ENCODE measurements at regions of chr13 and their contacts with region 1.

Region 1: DNA sequence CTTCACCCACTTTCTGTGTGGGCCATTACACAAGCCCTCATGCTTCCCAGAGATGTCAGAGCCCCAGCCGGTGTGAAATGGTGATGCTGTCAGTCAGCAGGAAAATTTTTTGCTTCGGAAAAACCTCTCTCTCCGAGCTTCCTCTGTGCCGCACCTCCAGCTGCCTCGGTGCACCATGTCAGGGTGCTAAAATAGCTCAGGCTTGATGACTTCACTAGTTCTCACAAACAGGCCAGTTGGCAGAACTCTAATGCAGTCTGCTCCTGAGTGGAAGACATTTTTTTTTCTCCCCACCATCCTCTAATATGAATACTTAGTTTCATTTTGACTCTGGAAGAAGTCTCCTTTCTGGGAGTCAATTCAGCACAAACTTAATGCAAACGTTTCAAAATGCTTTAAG is 71.3 kb downstream of the KLF12 start:
- DNase-seq: no peak
- ATAC-seq: no peak
- H3K4me3 ChIP-seq: no peak overlapping the region
- H3K27ac ChIP-seq: no peak overlapping the region
- H3K4me1 ChIP-seq: no peaks in the 10 kb centered on the region
- H3K27me3 ChIP-seq: no peaks in the 10 kb centered on the region
- CTCF ChIP-seq: no peak
- POLR2A ChIP-seq: no peak
- RAD21 ChIP-seq: no peak

Region 2: GRCh38 chr13:73278186-73278585 is 784.7 kb before region 1 on chr13:
- CTCF ChIA-PET with region 1: no interaction called
- POLR2A ChIA-PET with region 1: no interaction called
- RAD21 ChIA-PET with region 1: no interaction called
- intact Hi-C with region 1: no loop called
- DNase-seq: no peak
- ATAC-seq: no peak
- H3K4me3 ChIP-seq: no peak overlapping the region
- H3K27ac ChIP-seq: no peak overlapping the region
- H3K4me1 ChIP-seq: no peaks in the 10 kb centered on the region
- H3K27me3 ChIP-seq: no peaks in the 10 kb centered on the region
- CTCF ChIP-seq: no peak
- POLR2A ChIP-seq: no peak
- RAD21 ChIP-seq: no peak

Region 3: GRCh38 chr13:74037762-74038161 is 25.2 kb before region 1 on chr13:
- CTCF ChIA-PET with region 1: no interaction called
- POLR2A ChIA-PET with region 1: no interaction called
- RAD21 ChIA-PET with region 1: no interaction called
- intact Hi-C with region 1: loop called (anchors 2 kb)
- DNase-seq: no peak
- ATAC-seq: no peak
- H3K4me3 ChIP-seq: no peak overlapping the region
- H3K27ac ChIP-seq: no peak overlapping the region
- H3K4me1 ChIP-seq: peaks cover 6 to 8% of the 10 kb centered on the region in 2 experiments; a peak in 2 of 4 replicates
- H3K27me3 ChIP-seq: no peaks in the 10 kb centered on the region
- CTCF ChIP-seq: no peak
- POLR2A ChIP-seq: no peak
- RAD21 ChIP-seq: no peak

Region 4: DNA sequence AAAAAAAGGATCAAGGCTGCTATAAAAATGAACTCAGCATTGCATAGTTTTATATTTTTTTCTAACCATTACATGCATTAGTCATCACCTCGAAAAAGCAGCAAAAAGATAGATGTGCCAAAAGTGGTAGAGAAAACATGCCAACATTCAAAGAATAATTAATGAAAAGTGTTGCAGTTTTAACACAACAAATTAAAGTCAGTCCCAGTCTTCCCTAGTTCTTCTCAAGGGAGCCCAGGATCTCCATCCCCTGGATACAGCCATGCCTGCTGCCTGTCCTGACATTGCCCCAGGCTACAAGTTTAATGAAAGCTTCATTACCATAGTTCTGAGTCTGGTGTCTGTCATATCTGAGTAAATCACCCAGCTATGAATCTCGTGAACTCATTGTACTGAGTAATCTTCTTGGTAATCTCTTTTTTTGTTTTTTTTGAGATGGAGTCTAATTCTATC is 187.8 kb after region 1 on chr13:
- CTCF ChIA-PET with region 1: no interaction called
- POLR2A ChIA-PET with region 1: no interaction called
- RAD21 ChIA-PET with region 1: no interaction called
- intact Hi-C with region 1: no loop called
- DNase-seq: no peak
- ATAC-seq: no peak
- H3K4me3 ChIP-seq: no peak overlapping the region
- H3K27ac ChIP-seq: no peak overlapping the region
- H3K4me1 ChIP-seq: no peaks in the 10 kb centered on the region
- H3K27me3 ChIP-seq: no peaks in the 10 kb centered on the region
- CTCF ChIP-seq: no peak
- POLR2A ChIP-seq: no peak
- RAD21 ChIP-seq: no peak

Measured in HCT116 (cell line).